Endothelial cell of umbilical vein (primary cell): ENCODE measurements at regions of chr7 and their contacts with region 1.

Region 1: GRCh38 chr7:150898475-150899011 is 46.2 kb downstream of the AOC1 start:
- DNase-seq: peak; percentile 57
- H3K4me3 ChIP-seq: no peak overlapping the region
- H3K27ac ChIP-seq: no peak overlapping the region
- H3K4me1 ChIP-seq: no peaks in the 10 kb centered on the region
- H3K27me3 ChIP-seq: peaks cover 5 to 6% of the 10 kb centered on the region in 2 experiments
- CTCF ChIP-seq: peak; percentile 94 to 97
- POLR2A ChIP-seq: no peak

Region 2: GRCh38 chr7:150876817-150877526 is 21.6 kb before region 1 on chr7:
- CTCF ChIA-PET with region 1: interaction called, 29 read pairs
- POLR2A ChIA-PET with region 1: no interaction called
- dilution Hi-C with region 1: no loop called
- intact Hi-C with region 1: loop called (anchors 2 kb)
- DNase-seq: peak; percentile 89
- H3K4me3 ChIP-seq: no peak overlapping the region
- H3K27ac ChIP-seq: no peak overlapping the region
- H3K4me1 ChIP-seq: peaks cover 10% of the 10 kb centered on the region
- H3K27me3 ChIP-seq: peaks cover 8 to 50% of the 10 kb centered on the region in 2 experiments
- CTCF ChIP-seq: peak; percentile 46 to 63
- POLR2A ChIP-seq: no peak

Region 3: DNA sequence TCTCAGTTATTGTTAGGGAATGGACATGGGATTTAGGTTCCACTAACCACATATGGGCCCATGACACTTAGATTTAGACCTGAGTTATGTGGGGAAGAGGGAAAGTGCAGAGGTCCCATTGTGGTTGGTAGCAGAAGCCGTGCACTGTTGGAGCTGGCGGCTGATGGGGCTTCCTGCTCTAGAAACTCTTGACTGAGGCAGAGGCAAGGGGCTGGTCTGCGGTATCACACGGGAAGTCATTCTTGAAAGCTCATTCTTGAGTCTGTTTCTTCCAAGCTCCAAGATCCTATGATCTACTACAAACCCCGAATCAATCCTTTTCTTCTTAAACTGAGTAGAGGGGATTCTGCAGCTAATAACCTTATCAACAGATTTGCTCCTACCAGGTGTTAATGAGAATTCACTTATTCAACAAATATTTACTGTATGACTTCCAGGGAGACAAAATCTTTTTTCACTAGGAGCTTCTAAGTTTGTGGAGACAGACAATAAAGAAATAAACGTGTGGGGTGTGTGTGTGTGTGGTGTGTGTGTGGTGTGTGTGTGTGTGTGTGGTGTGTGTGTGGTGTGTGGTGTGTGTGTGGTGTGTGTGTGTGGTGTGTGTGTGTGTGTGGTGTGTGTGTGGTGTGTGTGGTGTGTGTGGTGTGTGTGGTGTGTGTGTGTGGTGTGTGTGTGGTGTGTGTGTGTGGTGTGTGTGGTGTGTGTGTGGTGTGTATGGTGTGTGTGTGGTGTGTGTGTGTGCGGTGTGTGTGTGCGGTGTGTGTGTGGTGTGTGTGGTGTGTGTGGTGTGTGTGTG is 10.9 kb after region 1 on chr7:
- CTCF ChIA-PET with region 1: interaction called, 20 read pairs
- POLR2A ChIA-PET with region 1: no interaction called
- dilution Hi-C with region 1: no loop called
- intact Hi-C with region 1: no loop called
- DNase-seq: no peak
- H3K4me3 ChIP-seq: no peak overlapping the region
- H3K27ac ChIP-seq: no peak overlapping the region
- H3K4me1 ChIP-seq: peaks cover 3% of the 10 kb centered on the region
- H3K27me3 ChIP-seq: peaks cover 2 to 7% of the 10 kb centered on the region in 2 experiments
- CTCF ChIP-seq: no peak
- POLR2A ChIP-seq: no peak

Region 4: DNA sequence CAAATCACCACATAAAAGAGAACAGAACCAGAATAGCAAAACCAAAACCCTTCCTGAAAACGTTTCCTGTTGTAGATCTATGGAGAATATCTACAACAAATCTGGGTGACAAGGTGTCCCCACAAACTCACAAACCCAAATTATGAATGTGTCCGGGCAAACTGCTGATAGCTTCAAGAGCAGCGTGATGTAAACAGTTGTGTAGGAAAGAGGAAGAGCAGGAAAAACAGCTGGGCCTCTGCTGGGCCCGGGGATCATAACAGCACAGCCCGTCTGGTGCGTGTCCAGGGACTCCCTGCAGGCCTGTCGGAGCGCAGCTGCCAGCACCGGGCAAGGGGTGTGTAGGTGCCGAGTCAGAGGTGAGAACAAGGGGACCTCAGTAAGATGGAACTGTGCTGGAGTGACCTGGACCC is 25.8 kb after region 1 on chr7:
- CTCF ChIA-PET with region 1: interaction called, 10 read pairs
- POLR2A ChIA-PET with region 1: no interaction called
- dilution Hi-C with region 1: no loop called
- intact Hi-C with region 1: no loop called
- DNase-seq: no peak
- H3K4me3 ChIP-seq: no peak overlapping the region
- H3K27ac ChIP-seq: no peak overlapping the region
- H3K4me1 ChIP-seq: no peaks in the 10 kb centered on the region
- H3K27me3 ChIP-seq: peaks cover 20 to 21% of the 10 kb centered on the region in 2 experiments
- CTCF ChIP-seq: no peak
- POLR2A ChIP-seq: no peak

Region 5: GRCh38 chr7:150931199-150931869 is 32.8 kb after region 1 on chr7:
- CTCF ChIA-PET with region 1: interaction called, 11 read pairs
- POLR2A ChIA-PET with region 1: no interaction called
- dilution Hi-C with region 1: no loop called
- intact Hi-C with region 1: no loop called
- DNase-seq: no peak
- H3K4me3 ChIP-seq: no peak overlapping the region
- H3K27ac ChIP-seq: no peak overlapping the region
- H3K4me1 ChIP-seq: no peaks in the 10 kb centered on the region
- H3K27me3 ChIP-seq: peaks cover 5 to 18% of the 10 kb centered on the region in 2 experiments
- CTCF ChIP-seq: no peak
- POLR2A ChIP-seq: no peak

Region 6: DNA sequence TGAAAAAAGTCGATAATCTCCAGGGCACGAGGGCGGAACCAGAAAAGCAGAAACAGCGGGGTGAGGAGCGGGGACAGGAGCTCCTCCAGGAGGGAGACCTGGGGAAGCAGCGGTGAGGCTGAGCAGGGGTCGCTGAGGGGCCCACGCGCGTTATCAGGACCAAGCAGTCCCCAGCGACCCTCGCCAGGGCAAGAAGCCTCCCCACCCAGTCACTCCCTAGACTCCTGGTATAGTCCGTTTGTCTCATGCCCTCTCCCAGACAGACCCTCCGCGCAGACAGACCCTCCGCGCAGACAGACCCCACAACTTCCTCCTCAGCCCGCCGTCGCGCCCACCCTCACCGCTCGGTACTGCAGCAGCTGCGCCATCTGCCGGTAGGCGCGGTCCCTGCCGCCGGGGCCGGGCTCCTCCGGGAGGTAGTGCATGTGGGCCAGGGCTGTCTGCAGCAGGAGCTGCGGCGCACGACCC is 119.4 kb after region 1 on chr7:
- CTCF ChIA-PET with region 1: interaction called, 19 read pairs
- POLR2A ChIA-PET with region 1: no interaction called
- dilution Hi-C with region 1: no loop called
- intact Hi-C with region 1: loop called (anchors 1 kb)
- DNase-seq: peak; percentile 58
- H3K4me3 ChIP-seq: no peak overlapping the region
- H3K27ac ChIP-seq: no peak overlapping the region
- H3K4me1 ChIP-seq: peaks cover 7% of the 10 kb centered on the region
- H3K27me3 ChIP-seq: peaks cover 12 to 14% of the 10 kb centered on the region in 2 experiments
- CTCF ChIP-seq: peak; percentile 98 to 99
- POLR2A ChIP-seq: no peak

Region 7: GRCh38 chr7:151172273-151173141 is 274.0 kb after region 1 on chr7:
- CTCF ChIA-PET with region 1: interaction called, 3 read pairs
- POLR2A ChIA-PET with region 1: no interaction called
- dilution Hi-C with region 1: no loop called
- intact Hi-C with region 1: loop called (anchors 1 kb)
- DNase-seq: peak; percentile 76
- H3K4me3 ChIP-seq: no peak overlapping the region
- H3K27ac ChIP-seq: no peak overlapping the region
- H3K4me1 ChIP-seq: peaks cover 3% of the 10 kb centered on the region
- H3K27me3 ChIP-seq: peaks cover 21 to 26% of the 10 kb centered on the region in 2 experiments
- CTCF ChIP-seq: peak; percentile 100
- POLR2A ChIP-seq: no peak